ENCODE measurements at regions of chr17 and their contacts with region 1.

Region 1: DNA sequence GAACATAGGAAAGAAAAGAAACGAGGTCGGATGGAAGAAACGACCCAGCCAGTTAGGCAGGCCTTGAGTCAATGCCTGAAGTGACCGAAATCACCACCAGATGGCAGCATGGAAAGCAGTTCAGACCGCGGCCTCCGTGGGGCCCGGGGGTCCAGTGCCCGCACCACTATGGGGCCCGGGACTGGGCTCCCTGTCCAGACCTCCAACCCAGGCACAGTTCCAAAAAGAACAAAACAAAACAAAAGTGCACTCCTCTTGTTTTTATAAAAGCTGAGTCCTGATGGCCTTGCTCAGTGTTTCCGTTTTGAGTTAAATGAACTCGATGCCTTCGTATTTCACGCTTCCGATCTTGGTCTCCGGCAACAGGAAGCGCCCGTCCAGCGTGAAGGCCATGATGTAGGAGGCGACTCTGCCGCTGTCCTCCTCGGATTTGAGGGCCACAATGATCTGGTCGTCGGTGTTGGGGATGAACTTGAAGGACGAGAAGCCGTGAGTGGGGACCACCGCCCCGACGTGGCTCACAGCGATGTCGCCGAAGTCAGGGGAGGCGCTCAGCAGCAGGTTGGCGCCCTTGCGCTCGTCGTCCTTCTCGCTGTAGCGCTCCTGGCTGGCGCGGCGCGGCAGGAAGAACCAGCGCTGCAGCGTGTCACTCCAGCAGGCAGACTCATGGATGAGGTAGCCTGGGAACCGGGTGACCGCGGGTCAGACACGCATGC is 13.7 kb upstream of the LGALS3BP start:
- DNase-seq: peak in 1 of 2 experiments; percentile 92
- H3K4me3 ChIP-seq: no peak overlapping the region
- H3K27ac ChIP-seq: no peak overlapping the region
- H3K4me1 ChIP-seq: no peaks in the 10 kb centered on the region
- H3K27me3 ChIP-seq: peaks cover 0 to 1% (median 0%) of the 10 kb centered on the region in 4 experiments; a peak in 1 of 7 replicates
- CTCF ChIP-seq: peak; percentile 82 to 89 (median 84)
- EP300 ChIP-seq: no peak
- POLR2A ChIP-seq: no peak
- RAD21 ChIP-seq: peak; percentile 63 to 72

Region 2: GRCh38 chr17:79011456-79012147 is 18.2 kb after region 1 on chr17:
- CTCF ChIA-PET with region 1: no interaction called
- POLR2A ChIA-PET with region 1: no interaction called
- DNase-seq: no peak
- H3K4me3 ChIP-seq: no peak overlapping the region
- H3K27ac ChIP-seq: no peak overlapping the region
- H3K4me1 ChIP-seq: peaks cover 0 to 9% (median 6%) of the 10 kb centered on the region in 4 experiments; a peak in 6 of 7 replicates
- H3K27me3 ChIP-seq: peaks cover 4 to 27% (median 27%) of the 10 kb centered on the region in 4 experiments
- CTCF ChIP-seq: no peak
- EP300 ChIP-seq: no peak
- POLR2A ChIP-seq: no peak
- RAD21 ChIP-seq: no peak

Region 3: DNA sequence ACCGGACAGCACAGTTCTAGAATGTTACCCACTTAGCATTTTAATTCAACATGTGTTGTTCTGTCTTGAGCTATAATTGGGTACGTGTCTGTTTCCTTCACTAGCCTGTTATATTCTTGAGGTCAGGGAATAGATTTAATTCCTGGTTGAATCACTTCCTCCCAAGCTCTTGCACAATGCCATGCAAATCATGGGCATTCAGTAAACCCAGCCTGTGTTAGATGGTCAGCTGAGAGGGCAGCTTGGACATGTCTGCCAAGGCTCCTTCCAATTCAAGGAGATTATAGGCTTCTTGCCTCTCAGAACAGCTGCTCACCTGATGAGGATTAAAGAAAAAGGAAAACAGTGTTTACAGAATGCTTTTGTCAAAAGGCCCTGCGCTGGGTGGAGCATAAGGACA is 43.2 kb after region 1 on chr17:
- CTCF ChIA-PET with region 1: interaction called, 24 read pairs
- POLR2A ChIA-PET with region 1: no interaction called
- DNase-seq: no peak
- H3K4me3 ChIP-seq: no peak overlapping the region
- H3K27ac ChIP-seq: no peak overlapping the region
- H3K4me1 ChIP-seq: no peaks in the 10 kb centered on the region
- H3K27me3 ChIP-seq: peaks cover 0 to 3% (median 1%) of the 10 kb centered on the region in 4 experiments; a peak in 3 of 7 replicates
- CTCF ChIP-seq: no peak
- EP300 ChIP-seq: no peak
- POLR2A ChIP-seq: no peak
- RAD21 ChIP-seq: no peak